Activated T-helper 2 cell treated with anti-CD3 and anti-CD28 coated beads, Interferon-gamma antibody, Interleukin-2, Interleukin-4, amounts not matched to agents 10 μg/mL and 5 μg/mL and 100 μg/mL, durations not matched to agents 14 hours and 24 hours and 36 hours (primary cell): ENCODE measurements at regions of chr2 and their contacts with region 1.

Region 1: DNA sequence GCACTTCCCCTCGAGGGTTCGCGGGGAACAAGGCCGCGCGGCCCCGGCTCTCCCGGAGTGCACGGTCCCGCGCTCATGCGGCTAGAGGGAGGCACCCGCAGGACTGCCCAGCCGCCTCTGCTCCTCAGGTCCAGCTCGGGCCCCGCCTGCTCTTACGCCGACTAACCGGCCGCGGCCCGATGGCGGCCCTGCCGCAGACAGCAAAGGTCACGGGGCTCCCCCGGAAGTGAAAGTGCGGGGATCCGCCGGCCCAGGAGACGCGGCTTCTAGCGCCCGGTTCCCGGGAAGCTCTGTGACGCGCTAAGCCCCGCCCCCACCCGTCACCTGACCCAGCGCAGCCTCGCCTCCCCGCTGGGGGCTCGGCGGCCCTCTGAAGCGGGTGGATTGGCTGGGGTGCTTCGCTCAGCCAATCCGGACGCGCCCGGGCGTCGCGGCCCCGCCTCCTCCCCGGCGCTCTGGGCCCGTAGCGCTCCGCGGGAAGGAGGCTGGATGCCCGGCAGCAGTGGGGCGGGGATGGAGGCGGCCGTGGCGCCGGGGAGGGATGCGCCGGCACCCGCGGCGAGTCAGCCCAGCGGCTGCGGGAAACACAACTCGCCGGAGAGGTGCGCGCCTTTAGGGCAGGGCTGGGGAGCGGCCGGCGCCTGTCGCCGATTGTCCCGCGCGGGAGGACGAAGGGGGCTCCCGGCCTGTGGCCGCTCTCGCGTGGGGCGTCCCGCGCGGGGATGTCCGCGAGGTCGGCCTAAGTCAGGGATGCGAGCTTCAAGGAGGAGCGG is at the start of gene SCLY:
- DNase-seq: peak; percentile 94
- H3K4me3 Mint-ChIP-seq: peak within 1 kb of the TSS; percentile 89
- H3K27ac Mint-ChIP-seq: peak within 1 kb of the TSS; percentile 92
- H3K4me1 Mint-ChIP-seq: peaks cover 56% of the 10 kb centered on the region
- H3K27me3 Mint-ChIP-seq: peaks cover 2% of the 10 kb centered on the region
- total RNA-seq, gene SCLY: 98.6 and 102 TPM in 2 replicates

Region 2: GRCh38 chr2:237691908-237692600 is 368.7 kb before region 1 on chr2:
- intact Hi-C with region 1: loop called (anchors 5 kb)
- DNase-seq: peak; percentile 91
- H3K4me3 Mint-ChIP-seq: peak overlapping the region; percentile 99
- H3K27ac Mint-ChIP-seq: peak overlapping the region; percentile 98
- H3K4me1 Mint-ChIP-seq: peaks cover 59% of the 10 kb centered on the region
- H3K27me3 Mint-ChIP-seq: no peaks in the 10 kb centered on the region

Region 3: GRCh38 chr2:237923481-237924163 is 137.1 kb before region 1 on chr2:
- intact Hi-C with region 1: loop called (anchors 5 kb)
- DNase-seq: peak; percentile 74
- H3K4me3 Mint-ChIP-seq: peak overlapping the region; percentile 33
- H3K27ac Mint-ChIP-seq: peak overlapping the region; percentile 74
- H3K4me1 Mint-ChIP-seq: peaks cover 17% of the 10 kb centered on the region
- H3K27me3 Mint-ChIP-seq: no peaks in the 10 kb centered on the region

Region 4: GRCh38 chr2:237998530-237998929 is 62.2 kb before region 1 on chr2:
- intact Hi-C with region 1: loop called (anchors 2 kb)
- DNase-seq: peak; percentile 25
- H3K4me3 Mint-ChIP-seq: peak overlapping the region; percentile 49
- H3K27ac Mint-ChIP-seq: peak overlapping the region; percentile 95
- H3K4me1 Mint-ChIP-seq: peaks cover 63% of the 10 kb centered on the region
- H3K27me3 Mint-ChIP-seq: no peaks in the 10 kb centered on the region

Region 5: GRCh38 chr2:238009563-238009962 is 51.2 kb before region 1 on chr2:
- intact Hi-C with region 1: no loop called
- DNase-seq: no peak
- H3K4me3 Mint-ChIP-seq: peak overlapping the region; percentile 78
- H3K27ac Mint-ChIP-seq: peak overlapping the region; percentile 99
- H3K4me1 Mint-ChIP-seq: peaks cover 59% of the 10 kb centered on the region
- H3K27me3 Mint-ChIP-seq: no peaks in the 10 kb centered on the region

Region 6: DNA sequence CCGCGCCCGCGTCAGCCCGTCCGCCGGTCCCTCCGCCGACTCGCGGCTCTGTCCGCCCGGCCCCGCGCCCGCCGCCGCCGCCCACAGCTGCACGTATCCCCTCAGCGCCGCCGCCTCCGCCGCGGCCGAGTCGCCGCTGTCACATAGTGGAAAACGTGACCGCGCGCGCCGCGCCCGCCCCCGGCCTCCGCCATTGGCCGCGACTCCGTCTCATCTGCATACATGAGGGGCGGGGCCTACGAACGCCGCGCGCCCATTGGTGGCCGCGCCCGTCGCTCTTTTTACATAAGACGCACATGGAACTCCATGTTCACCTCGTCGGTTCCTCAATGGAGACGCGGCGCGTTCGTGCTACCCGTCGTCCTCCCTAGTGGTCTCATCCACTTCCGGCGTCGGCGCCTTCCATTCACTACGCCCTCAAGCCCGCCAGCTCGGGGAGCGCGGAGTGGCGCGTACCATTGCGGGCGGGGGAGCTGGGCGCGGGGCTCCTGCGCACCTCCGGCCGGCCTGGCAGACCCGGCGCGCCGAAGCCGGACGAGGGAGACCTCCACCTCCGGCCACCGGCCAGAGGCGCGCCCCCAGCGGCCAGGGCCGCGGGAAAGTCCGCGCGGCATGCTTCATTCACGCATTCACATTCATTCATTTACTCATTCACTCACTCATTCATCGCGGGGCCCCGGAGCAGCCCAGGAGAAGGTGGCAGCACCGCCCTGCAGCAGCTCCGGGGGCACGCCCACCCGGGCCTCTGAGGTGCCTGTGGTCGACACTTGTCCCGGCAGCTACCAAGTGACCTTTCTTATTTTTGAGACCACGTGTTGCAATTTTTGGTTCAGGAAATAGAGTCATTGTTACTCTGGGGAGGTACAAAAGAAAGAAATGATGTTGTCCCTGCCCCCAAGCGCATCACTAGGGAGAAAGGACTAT is 228.2 kb after region 1 on chr2:
- intact Hi-C with region 1: loop called (anchors 2 kb)
- DNase-seq: peak; percentile 98
- H3K4me3 Mint-ChIP-seq: peak overlapping the region; percentile 90
- H3K27ac Mint-ChIP-seq: peak overlapping the region; percentile 94
- H3K4me1 Mint-ChIP-seq: peaks cover 31% of the 10 kb centered on the region
- H3K27me3 Mint-ChIP-seq: no peaks in the 10 kb centered on the region

Region 7: GRCh38 chr2:238379096-238379810 is 318.5 kb after region 1 on chr2:
- intact Hi-C with region 1: no loop called
- DNase-seq: no peak
- H3K4me3 Mint-ChIP-seq: no peak overlapping the region
- H3K27ac Mint-ChIP-seq: peak overlapping the region; percentile 62
- H3K4me1 Mint-ChIP-seq: peaks cover 34% of the 10 kb centered on the region
- H3K27me3 Mint-ChIP-seq: peaks cover 3% of the 10 kb centered on the region